ENCODE measurements at regions of chr15 and their contacts with region 1.

Region 1: DNA sequence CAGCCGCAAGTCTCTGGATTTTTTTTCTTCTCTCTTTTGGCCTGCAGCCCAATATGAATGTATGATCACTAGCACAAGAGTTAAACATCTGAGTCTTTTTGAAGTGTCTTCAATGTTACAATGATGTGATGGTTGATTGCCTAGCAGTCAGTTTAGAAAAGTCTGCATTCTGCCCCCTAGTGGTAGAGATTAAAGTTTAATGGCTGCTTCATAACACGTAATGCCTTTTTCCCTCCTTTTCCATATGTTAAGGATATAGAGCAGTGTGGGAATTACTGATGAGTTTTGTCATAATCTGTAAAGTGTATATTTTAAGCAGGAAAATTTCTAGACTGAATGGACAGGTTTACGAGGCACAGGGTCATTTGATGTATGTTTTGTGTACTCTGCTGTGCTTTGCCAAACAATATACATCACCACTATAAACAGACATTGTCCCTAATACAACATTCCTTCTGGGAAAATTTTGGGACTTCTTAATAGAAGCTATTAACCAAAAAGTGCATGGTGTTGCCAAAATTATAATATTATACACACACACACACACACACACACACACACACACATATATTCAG is 1038.5 kb upstream of the NR2F2 start:
- DNase-seq: peak; percentile 42 to 63
- ATAC-seq: peak; percentile 52 to 90; a peak in 4 of 6 replicates
- H3K4me3 ChIP-seq: no peak overlapping the region
- H3K27ac ChIP-seq: no peak overlapping the region
- H3K4me1 ChIP-seq: no peaks in the 10 kb centered on the region
- CTCF ChIP-seq: peak; percentile 83
- EP300 ChIP-seq: no peak
- POLR2A ChIP-seq: no peak
- RAD21 ChIP-seq: peak; percentile 55 to 58

Region 2: DNA sequence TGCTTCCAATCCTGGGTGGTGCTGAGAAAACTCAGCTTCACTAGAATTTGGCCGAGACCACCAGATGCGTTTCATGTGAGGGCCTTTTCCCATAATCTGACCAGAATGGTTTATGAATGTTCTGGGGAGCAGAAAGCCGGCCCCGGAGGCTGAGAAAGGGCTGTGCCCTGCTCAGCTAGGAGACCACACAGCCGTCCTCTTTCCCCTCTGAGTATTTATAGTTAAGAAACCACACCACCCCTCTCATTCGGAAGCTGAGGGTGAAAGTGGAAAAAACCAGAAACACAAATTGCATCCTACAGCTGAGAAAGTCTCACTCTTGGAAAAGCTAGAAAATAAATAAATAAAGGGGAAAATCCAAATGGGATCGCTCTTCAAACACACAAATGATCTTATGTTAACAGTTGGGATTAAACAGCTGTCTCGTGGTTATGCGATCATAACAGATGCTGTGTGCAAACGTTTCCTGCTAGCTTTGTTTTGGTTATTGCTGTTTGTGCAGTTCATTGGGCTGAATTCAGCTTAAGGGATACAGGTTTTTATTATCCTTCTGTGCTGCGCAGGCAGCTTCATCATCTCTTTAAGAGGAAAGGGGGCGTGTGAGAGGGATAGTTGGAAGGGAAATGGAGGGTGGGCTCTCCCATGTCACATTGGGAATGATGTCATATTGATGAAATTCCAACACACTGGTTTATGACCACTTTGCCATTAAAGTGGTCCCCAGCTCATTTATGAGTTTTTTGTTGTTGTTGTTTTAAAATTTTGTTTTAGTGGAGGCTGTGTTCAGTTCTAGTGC is 12.4 kb after region 1 on chr15:
- CTCF ChIA-PET with region 1: interaction called, 11 read pairs
- POLR2A ChIA-PET with region 1: no interaction called
- DNase-seq: no peak
- ATAC-seq: no peak
- H3K4me3 ChIP-seq: no peak overlapping the region
- H3K27ac ChIP-seq: no peak overlapping the region
- H3K4me1 ChIP-seq: no peaks in the 10 kb centered on the region
- CTCF ChIP-seq: no peak
- EP300 ChIP-seq: no peak
- POLR2A ChIP-seq: no peak
- RAD21 ChIP-seq: no peak

Region 3: GRCh38 chr15:96924570-96924969 is 1632.6 kb after region 1 on chr15:
- CTCF ChIA-PET with region 1: no interaction called
- POLR2A ChIA-PET with region 1: interaction called, 11 read pairs
- DNase-seq: no peak
- ATAC-seq: no peak
- H3K4me3 ChIP-seq: no peak overlapping the region
- H3K27ac ChIP-seq: no peak overlapping the region
- H3K4me1 ChIP-seq: no peaks in the 10 kb centered on the region
- CTCF ChIP-seq: no peak
- EP300 ChIP-seq: no peak
- POLR2A ChIP-seq: no peak
- RAD21 ChIP-seq: no peak

Measured in A549 (cell line).